ENCODE measurements at regions of chr5 and their contacts with region 1.

Region 1: GRCh38 chr5:79133657-79134451 is 22.2 kb downstream of the BHMT start:
- DNase-seq: peak; percentile 66
- ATAC-seq: peak; percentile 58
- H3K4me3 ChIP-seq: peak overlapping the region in 1 of 5 experiments; percentile 0
- H3K4me3 Mint-ChIP-seq: no peak overlapping the region
- H3K27ac ChIP-seq: no peak overlapping the region
- H3K27ac Mint-ChIP-seq: no peak overlapping the region
- H3K4me1 ChIP-seq: peaks cover 7 to 10% of the 10 kb centered on the region in 2 donors
- H3K4me1 Mint-ChIP-seq: peaks cover 8% of the 10 kb centered on the region
- H3K27me3 ChIP-seq: peaks cover 0 to 3% (median 0%) of the 10 kb centered on the region in 4 experiments
- H3K27me3 Mint-ChIP-seq: peaks cover 8% of the 10 kb centered on the region
- CTCF ChIP-seq: peak; percentile 66

Region 2: DNA sequence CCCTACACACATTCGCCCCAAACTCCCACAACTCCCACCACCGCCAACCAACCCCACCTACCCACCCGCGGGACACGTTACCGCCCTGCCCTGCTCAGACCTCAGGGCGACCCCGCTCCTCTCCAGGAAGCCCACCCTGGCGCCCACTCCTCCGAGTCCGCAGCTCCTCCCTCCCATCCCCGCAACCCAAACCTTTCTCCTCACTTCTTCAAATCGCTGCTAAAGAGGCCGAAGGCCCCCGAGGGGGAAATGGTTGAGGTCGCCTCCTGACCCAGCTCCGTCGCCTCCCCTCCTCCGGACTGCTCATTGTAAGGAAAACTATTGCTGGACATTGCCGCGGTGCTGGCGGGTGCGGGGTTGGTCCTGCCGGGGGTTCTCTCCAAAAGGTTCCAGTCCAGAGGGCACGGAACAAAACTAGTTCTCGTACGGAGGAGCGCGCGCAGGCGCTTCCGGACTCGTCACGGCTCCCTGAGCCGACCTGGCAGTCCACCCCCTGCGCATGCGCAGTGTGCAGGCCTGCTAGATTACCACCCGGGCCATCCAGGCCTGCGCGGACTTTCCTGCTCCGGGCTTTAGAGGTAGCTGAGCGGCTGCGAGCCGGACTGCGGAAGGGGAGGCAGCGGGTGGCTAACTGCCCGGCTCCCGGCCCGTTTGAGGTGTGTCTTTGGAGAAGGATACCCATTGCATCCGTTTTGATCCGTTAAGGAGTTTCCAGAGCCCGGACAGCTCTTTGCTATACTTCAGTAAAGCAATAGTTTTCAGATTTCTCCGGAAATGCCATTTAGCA is 839.4 kb before region 1 on chr5 and contains the start of gene AP3B1:
- CTCF ChIA-PET with region 1: no interaction called
- POLR2A ChIA-PET with region 1: interaction called, 3 read pairs
- intact Hi-C with region 1: loop called (anchors 10 kb)
- DNase-seq: peak; percentile 98
- ATAC-seq: peak; percentile 91
- H3K4me3 ChIP-seq: peak within 1 kb of the TSS; percentile 74 to 99 (median 87)
- H3K4me3 Mint-ChIP-seq: peak within 1 kb of the TSS; percentile 98
- H3K27ac ChIP-seq: peak within 1 kb of the TSS; percentile 75 to 90
- H3K27ac Mint-ChIP-seq: peak within 1 kb of the TSS; percentile 98
- H3K4me1 ChIP-seq: peaks cover 11 to 12% of the 10 kb centered on the region in 2 donors
- H3K4me1 Mint-ChIP-seq: peaks cover 36% of the 10 kb centered on the region
- H3K27me3 ChIP-seq: no peaks in the 10 kb centered on the region
- H3K27me3 Mint-ChIP-seq: no peaks in the 10 kb centered on the region
- CTCF ChIP-seq: no peak
- total RNA-seq, gene AP3B1: 58.9 and 63.5 TPM in 2 replicates

Region 3: GRCh38 chr5:78467752-78468357 is 666.0 kb before region 1 on chr5:
- CTCF ChIA-PET with region 1: interaction called, 10 read pairs
- POLR2A ChIA-PET with region 1: no interaction called
- intact Hi-C with region 1: loop called (anchors 1 kb)
- DNase-seq: peak; percentile 47
- ATAC-seq: peak; percentile 63
- H3K4me3 ChIP-seq: no peak overlapping the region
- H3K4me3 Mint-ChIP-seq: no peak overlapping the region
- H3K27ac ChIP-seq: no peak overlapping the region
- H3K27ac Mint-ChIP-seq: no peak overlapping the region
- H3K4me1 ChIP-seq: no peaks in the 10 kb centered on the region
- H3K4me1 Mint-ChIP-seq: peaks cover 3% of the 10 kb centered on the region
- H3K27me3 ChIP-seq: no peaks in the 10 kb centered on the region
- H3K27me3 Mint-ChIP-seq: no peaks in the 10 kb centered on the region
- CTCF ChIP-seq: peak; percentile 90

Region 4: GRCh38 chr5:79020861-79021561 is 112.8 kb before region 1 on chr5:
- CTCF ChIA-PET with region 1: interaction called, 85 read pairs
- POLR2A ChIA-PET with region 1: no interaction called
- intact Hi-C with region 1: loop called (anchors 1 kb)
- DNase-seq: peak; percentile 58
- ATAC-seq: peak; percentile 28
- H3K4me3 ChIP-seq: no peak overlapping the region
- H3K4me3 Mint-ChIP-seq: peak overlapping the region; percentile 14
- H3K27ac ChIP-seq: no peak overlapping the region
- H3K27ac Mint-ChIP-seq: no peak overlapping the region
- H3K4me1 ChIP-seq: peaks cover 6 to 12% of the 10 kb centered on the region in 2 donors
- H3K4me1 Mint-ChIP-seq: peaks cover 8% of the 10 kb centered on the region
- H3K27me3 ChIP-seq: peaks cover 0 to 12% (median 10%) of the 10 kb centered on the region in 4 experiments
- H3K27me3 Mint-ChIP-seq: peaks cover 56% of the 10 kb centered on the region
- CTCF ChIP-seq: peak; percentile 78

Region 5: DNA sequence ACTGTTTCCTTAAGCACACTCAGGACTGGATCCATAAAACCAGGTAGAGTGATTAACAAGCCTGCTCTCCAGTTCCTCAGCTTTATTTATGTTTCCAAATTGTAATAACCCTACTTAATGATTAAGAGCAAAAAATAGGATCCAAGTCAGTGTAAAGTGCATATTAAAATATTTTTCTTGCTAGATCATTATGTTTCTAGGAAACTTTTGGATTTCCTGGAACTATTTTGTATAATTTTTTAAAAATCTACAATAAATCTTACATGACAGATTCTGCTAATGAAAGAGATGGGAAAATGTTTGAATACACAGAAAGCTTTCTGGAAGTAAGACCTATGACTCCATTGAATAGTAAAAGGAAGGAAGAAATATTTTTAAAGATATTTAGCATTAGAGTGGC is 13.2 kb after region 1 on chr5:
- CTCF ChIA-PET with region 1: interaction called, 12 read pairs
- POLR2A ChIA-PET with region 1: no interaction called
- intact Hi-C with region 1: no loop called
- DNase-seq: no peak
- ATAC-seq: no peak
- H3K4me3 ChIP-seq: no peak overlapping the region
- H3K4me3 Mint-ChIP-seq: no peak overlapping the region
- H3K27ac ChIP-seq: no peak overlapping the region
- H3K27ac Mint-ChIP-seq: no peak overlapping the region
- H3K4me1 ChIP-seq: no peaks in the 10 kb centered on the region
- H3K4me1 Mint-ChIP-seq: no peaks in the 10 kb centered on the region
- H3K27me3 ChIP-seq: peaks cover 0 to 4% (median 0%) of the 10 kb centered on the region in 4 experiments
- H3K27me3 Mint-ChIP-seq: peaks cover 29% of the 10 kb centered on the region
- CTCF ChIP-seq: no peak

Measured in B cell (primary cell).